ENCODE measurements at regions of chr7 and their contacts with region 1.

Region 1: GRCh38 chr7:151315038-151315655 is 26.5 kb upstream of the NUB1 start:
- DNase-seq: peak; percentile 86
- H3K4me3 Mint-ChIP-seq: peak overlapping the region; percentile 6
- H3K27ac Mint-ChIP-seq: peak overlapping the region; percentile 43
- H3K4me1 Mint-ChIP-seq: peaks cover 10% of the 10 kb centered on the region
- H3K27me3 Mint-ChIP-seq: peaks cover 3% of the 10 kb centered on the region

Region 2: DNA sequence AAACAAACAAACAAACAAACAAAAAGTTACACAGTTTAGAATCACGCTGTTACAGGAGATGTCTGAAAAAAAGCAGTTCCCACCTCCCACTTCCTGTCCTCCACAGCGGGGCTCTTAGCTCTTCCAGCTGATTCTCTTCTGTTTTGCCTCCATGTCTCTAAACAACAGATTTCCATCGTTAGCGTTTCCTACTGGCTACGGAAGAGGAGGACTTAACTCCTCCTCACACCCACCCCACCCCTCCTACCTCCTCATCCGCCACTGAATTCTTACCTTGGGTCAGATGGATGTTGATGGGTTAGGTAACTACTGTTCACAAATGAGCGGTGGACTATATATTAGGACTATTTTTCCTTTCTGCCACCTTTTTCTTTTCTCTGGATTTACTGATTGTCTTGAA is 10.3 kb before region 1 on chr7:
- CTCF ChIA-PET with region 1: interaction called, 20 read pairs
- DNase-seq: no peak
- H3K4me3 Mint-ChIP-seq: peak overlapping the region; percentile 8
- H3K27ac Mint-ChIP-seq: no peak overlapping the region
- H3K4me1 Mint-ChIP-seq: peaks cover 15% of the 10 kb centered on the region
- H3K27me3 Mint-ChIP-seq: peaks cover 82% of the 10 kb centered on the region

Region 3: DNA sequence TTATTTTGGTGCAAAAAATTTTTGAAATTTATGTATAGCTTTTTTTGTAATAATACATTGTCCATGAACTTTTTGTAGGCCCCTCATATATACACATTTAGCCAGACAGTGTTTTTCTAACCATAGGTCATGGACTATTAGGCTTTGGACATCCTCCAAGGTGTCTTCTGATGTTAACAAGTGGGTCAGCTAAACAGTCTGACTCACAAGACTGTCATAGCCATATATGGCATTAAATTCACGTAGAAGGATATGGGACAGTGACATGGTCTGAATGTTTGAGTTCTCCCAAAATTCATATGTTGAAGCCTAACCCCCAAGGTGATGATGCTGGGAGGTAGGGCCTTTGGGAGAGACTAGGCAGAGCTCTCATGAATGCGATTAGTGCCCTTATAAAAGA is 12.5 kb after region 1 on chr7:
- CTCF ChIA-PET with region 1: interaction called, 11 read pairs
- DNase-seq: no peak
- H3K4me3 Mint-ChIP-seq: no peak overlapping the region
- H3K27ac Mint-ChIP-seq: no peak overlapping the region
- H3K4me1 Mint-ChIP-seq: no peaks in the 10 kb centered on the region
- H3K27me3 Mint-ChIP-seq: peaks cover 15% of the 10 kb centered on the region

Region 4: DNA sequence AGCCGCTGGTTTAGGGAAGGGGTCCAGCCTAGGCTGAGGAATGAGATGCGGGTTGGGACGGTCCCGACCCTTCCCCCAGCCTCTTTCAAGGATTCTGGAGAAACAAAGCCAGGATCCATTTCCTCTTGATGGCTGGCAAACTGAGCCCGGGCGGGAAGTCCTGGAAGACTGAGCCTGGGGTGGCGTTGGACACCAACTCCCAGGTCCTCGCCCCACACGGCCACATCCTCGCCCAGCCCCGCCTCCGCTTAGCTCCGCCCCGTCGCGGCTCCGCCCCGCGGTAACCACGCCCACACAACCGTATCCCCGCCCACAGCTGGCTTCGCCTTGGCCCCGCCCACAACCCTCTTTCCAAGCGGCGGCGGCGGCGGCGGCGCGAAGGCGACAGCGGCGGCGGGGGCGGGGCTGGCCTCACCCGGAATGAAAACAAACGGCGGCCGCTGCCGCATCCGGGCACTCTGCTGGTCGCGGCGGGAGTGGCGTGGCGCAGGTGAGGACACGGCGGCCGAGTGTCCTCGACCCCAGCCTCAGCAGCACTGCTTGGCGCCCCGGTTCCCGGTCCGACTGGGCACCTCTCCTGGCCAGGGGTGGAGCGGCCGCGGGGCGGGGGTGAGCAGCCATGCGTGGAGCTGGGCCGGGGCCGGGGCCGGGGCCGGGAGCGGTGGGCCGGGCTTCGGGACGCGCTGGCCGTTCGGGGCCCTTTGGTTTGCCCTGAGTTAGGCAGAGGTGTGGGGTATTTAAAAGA is 26.4 kb after region 1 on chr7 and contains the start of gene NUB1:
- CTCF ChIA-PET with region 1: interaction called, 17 read pairs
- DNase-seq: peak; percentile 92
- H3K4me3 Mint-ChIP-seq: peak within 1 kb of the TSS; percentile 84
- H3K27ac Mint-ChIP-seq: peak within 1 kb of the TSS; percentile 95
- H3K4me1 Mint-ChIP-seq: peaks cover 36% of the 10 kb centered on the region
- H3K27me3 Mint-ChIP-seq: no peaks in the 10 kb centered on the region

Region 5: DNA sequence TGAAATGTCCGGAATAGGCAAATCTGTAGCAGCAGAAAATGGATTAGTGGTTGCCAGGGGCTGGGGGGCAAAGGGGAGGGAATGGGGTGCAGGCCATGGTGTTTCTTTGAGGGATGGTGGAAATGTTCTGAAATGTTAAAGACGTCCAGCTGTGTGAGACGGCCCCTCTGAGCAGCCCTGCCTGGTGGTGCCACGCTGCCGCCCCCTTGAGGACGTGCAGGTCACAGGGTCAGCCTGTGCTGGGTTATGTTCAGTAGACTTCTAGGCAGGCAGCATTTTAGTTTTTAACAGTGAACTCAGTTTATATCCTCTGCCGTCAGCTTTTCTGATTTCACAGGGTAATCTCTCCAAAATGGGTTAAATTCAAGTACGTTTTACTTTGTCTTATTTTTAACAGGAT is 35.9 kb after region 1 on chr7:
- CTCF ChIA-PET with region 1: interaction called, 121 read pairs
- DNase-seq: peak; percentile 46
- H3K4me3 Mint-ChIP-seq: peak overlapping the region; percentile 63
- H3K27ac Mint-ChIP-seq: peak overlapping the region; percentile 94
- H3K4me1 Mint-ChIP-seq: peaks cover 52% of the 10 kb centered on the region
- H3K27me3 Mint-ChIP-seq: no peaks in the 10 kb centered on the region

Region 6: DNA sequence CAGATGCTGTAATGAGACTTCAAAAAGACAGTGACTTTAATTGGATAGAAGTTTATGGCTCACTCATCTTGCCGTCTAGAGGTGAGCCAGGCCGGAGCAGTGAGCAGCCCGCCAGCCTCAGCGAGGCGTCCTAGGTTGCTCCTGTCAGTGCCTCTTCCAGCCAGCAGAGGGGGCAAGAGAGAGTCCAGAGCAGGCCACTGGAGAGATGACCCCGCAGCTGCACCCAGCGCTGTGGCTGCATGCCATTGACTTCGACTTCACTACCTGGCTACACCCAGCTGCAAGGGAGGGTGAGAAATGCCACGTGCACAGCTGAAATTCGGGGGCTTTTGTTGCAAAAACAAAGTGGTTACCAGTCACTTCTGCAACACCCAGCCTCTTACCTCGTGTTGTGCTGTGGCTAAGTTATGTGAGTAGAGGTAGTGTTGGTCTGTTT is 53.0 kb after region 1 on chr7:
- CTCF ChIA-PET with region 1: interaction called, 11 read pairs
- DNase-seq: peak; percentile 85
- H3K4me3 Mint-ChIP-seq: no peak overlapping the region
- H3K27ac Mint-ChIP-seq: no peak overlapping the region
- H3K4me1 Mint-ChIP-seq: peaks cover 11% of the 10 kb centered on the region
- H3K27me3 Mint-ChIP-seq: no peaks in the 10 kb centered on the region

Region 7: GRCh38 chr7:151448261-151449252 is 133.4 kb after region 1 on chr7:
- CTCF ChIA-PET with region 1: interaction called, 67 read pairs
- DNase-seq: peak; percentile 85
- H3K4me3 Mint-ChIP-seq: peak overlapping the region; percentile 70
- H3K27ac Mint-ChIP-seq: no peak overlapping the region
- H3K4me1 Mint-ChIP-seq: peaks cover 9% of the 10 kb centered on the region
- H3K27me3 Mint-ChIP-seq: peaks cover 60% of the 10 kb centered on the region